ENCODE measurements at regions of chr15 and their contacts with region 1.

Region 1: DNA sequence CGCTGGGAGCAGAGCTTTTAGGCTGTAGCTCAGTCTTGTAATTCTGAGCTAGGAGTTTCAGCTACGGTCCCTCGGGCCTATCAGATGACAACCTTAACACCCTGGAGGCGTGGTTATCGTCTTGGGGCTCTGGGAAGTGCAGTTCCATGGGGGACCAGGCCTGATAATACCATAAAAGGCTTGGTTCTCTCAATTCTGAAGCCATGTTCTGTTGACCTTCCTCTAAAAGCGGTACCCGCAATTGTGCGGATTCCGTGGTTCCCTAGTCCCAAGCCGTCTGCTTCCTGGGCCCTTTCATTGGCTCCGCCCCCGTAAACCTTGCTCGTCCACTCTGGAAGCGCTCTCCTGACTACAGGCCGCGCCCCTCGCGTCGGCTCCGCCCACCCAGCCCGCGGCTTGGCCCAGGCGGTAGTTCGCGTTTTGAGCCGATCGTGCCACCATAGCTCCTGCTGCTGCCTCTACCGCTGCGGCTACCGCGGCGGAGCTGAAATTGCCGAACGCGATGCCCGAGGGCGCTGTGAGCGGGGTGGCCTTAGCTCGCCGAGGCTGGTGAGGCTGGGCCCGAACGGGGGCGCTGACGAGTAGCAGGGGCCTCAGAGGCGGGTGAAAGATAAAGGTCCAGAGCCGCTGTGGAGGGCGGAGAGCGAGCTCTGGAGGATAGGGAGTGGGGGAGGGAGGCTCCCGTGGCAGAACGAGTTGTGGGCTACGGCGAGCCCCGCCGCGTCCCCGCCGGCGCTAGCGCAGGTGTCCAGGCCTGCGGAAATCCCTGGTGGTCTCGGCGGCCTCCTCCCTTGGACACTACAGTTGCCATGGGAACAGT is at the start of gene MAPKBP1:
- DNase-seq: peak; percentile 97 to 98
- H3K4me3 ChIP-seq: peak within 1 kb of the TSS; percentile 65
- H3K4me3 Mint-ChIP-seq: peak within 1 kb of the TSS; percentile 94
- H3K27ac Mint-ChIP-seq: peak within 1 kb of the TSS; percentile 91
- H3K4me1 ChIP-seq: peaks cover 18% of the 10 kb centered on the region
- H3K4me1 Mint-ChIP-seq: peaks cover 27% of the 10 kb centered on the region
- H3K27me3 ChIP-seq: no peaks in the 10 kb centered on the region
- H3K27me3 Mint-ChIP-seq: no peaks in the 10 kb centered on the region
- CTCF ChIP-seq: peak; percentile 63 to 84
- total RNA-seq, gene MAPKBP1: 16.2 and 23.0 TPM in 2 replicates

Region 2: GRCh38 chr15:41557673-41558399 is 216.4 kb before region 1 on chr15:
- CTCF ChIA-PET with region 1: no interaction called
- POLR2A ChIA-PET with region 1: no interaction called
- intact Hi-C with region 1: loop called (anchors 5 kb)
- DNase-seq: peak; percentile 73 to 79
- H3K4me3 ChIP-seq: peak overlapping the region; percentile 56
- H3K4me3 Mint-ChIP-seq: peak overlapping the region; percentile 94
- H3K27ac Mint-ChIP-seq: peak overlapping the region; percentile 91
- H3K4me1 ChIP-seq: peaks cover 38% of the 10 kb centered on the region
- H3K4me1 Mint-ChIP-seq: peaks cover 27% of the 10 kb centered on the region
- H3K27me3 ChIP-seq: no peaks in the 10 kb centered on the region
- H3K27me3 Mint-ChIP-seq: no peaks in the 10 kb centered on the region
- CTCF ChIP-seq: peak; percentile 82 to 92

Region 3: GRCh38 chr15:41806291-41807181 is 32.3 kb after region 1 on chr15:
- CTCF ChIA-PET with region 1: interaction called, 47 read pairs
- POLR2A ChIA-PET with region 1: interaction called, 4 read pairs
- intact Hi-C with region 1: loop called (anchors 1 kb)
- DNase-seq: peak in 1 of 2 experiments; percentile 46
- H3K4me3 ChIP-seq: no peak overlapping the region
- H3K4me3 Mint-ChIP-seq: no peak overlapping the region
- H3K27ac Mint-ChIP-seq: no peak overlapping the region
- H3K4me1 ChIP-seq: no peaks in the 10 kb centered on the region
- H3K4me1 Mint-ChIP-seq: no peaks in the 10 kb centered on the region
- H3K27me3 ChIP-seq: no peaks in the 10 kb centered on the region
- H3K27me3 Mint-ChIP-seq: no peaks in the 10 kb centered on the region
- CTCF ChIP-seq: no peak

Region 4: GRCh38 chr15:41811432-41812195 is 37.3 kb after region 1 on chr15:
- CTCF ChIA-PET with region 1: interaction called, 47 read pairs
- POLR2A ChIA-PET with region 1: interaction called, 4 read pairs
- intact Hi-C with region 1: loop called (anchors 1 kb)
- DNase-seq: peak; percentile 79 to 86
- H3K4me3 ChIP-seq: no peak overlapping the region
- H3K4me3 Mint-ChIP-seq: no peak overlapping the region
- H3K27ac Mint-ChIP-seq: no peak overlapping the region
- H3K4me1 ChIP-seq: no peaks in the 10 kb centered on the region
- H3K4me1 Mint-ChIP-seq: no peaks in the 10 kb centered on the region
- H3K27me3 ChIP-seq: no peaks in the 10 kb centered on the region
- H3K27me3 Mint-ChIP-seq: no peaks in the 10 kb centered on the region
- CTCF ChIP-seq: peak; percentile 87 to 90

Region 5: GRCh38 chr15:41904541-41905005 is 130.3 kb after region 1 on chr15:
- CTCF ChIA-PET with region 1: interaction called, 23 read pairs
- POLR2A ChIA-PET with region 1: no interaction called
- intact Hi-C with region 1: loop called (anchors 2 kb)
- DNase-seq: peak; percentile 56 to 68
- H3K4me3 ChIP-seq: no peak overlapping the region
- H3K4me3 Mint-ChIP-seq: no peak overlapping the region
- H3K27ac Mint-ChIP-seq: no peak overlapping the region
- H3K4me1 ChIP-seq: no peaks in the 10 kb centered on the region
- H3K4me1 Mint-ChIP-seq: no peaks in the 10 kb centered on the region
- H3K27me3 ChIP-seq: no peaks in the 10 kb centered on the region
- H3K27me3 Mint-ChIP-seq: no peaks in the 10 kb centered on the region
- CTCF ChIP-seq: peak; percentile 77 to 85

Region 6: GRCh38 chr15:41999290-42000285 is 225.3 kb after region 1 on chr15:
- CTCF ChIA-PET with region 1: no interaction called
- POLR2A ChIA-PET with region 1: no interaction called
- intact Hi-C with region 1: no loop called
- DNase-seq: no peak
- H3K4me3 ChIP-seq: no peak overlapping the region
- H3K4me3 Mint-ChIP-seq: no peak overlapping the region
- H3K27ac Mint-ChIP-seq: peak overlapping the region; percentile 18
- H3K4me1 ChIP-seq: peaks cover 7% of the 10 kb centered on the region; the same call in 1 of the 2 replicates
- H3K4me1 Mint-ChIP-seq: peaks cover 15% of the 10 kb centered on the region
- H3K27me3 ChIP-seq: no peaks in the 10 kb centered on the region
- H3K27me3 Mint-ChIP-seq: no peaks in the 10 kb centered on the region
- CTCF ChIP-seq: no peak

Region 7: GRCh38 chr15:42084460-42085235 is 310.4 kb after region 1 on chr15:
- CTCF ChIA-PET with region 1: no interaction called
- POLR2A ChIA-PET with region 1: no interaction called
- intact Hi-C with region 1: loop called (anchors 5 kb)
- DNase-seq: peak; percentile 69 to 81
- H3K4me3 ChIP-seq: no peak overlapping the region
- H3K4me3 Mint-ChIP-seq: no peak overlapping the region
- H3K27ac Mint-ChIP-seq: no peak overlapping the region
- H3K4me1 ChIP-seq: no peaks in the 10 kb centered on the region
- H3K4me1 Mint-ChIP-seq: peaks cover 8% of the 10 kb centered on the region
- H3K27me3 ChIP-seq: no peaks in the 10 kb centered on the region
- H3K27me3 Mint-ChIP-seq: no peaks in the 10 kb centered on the region
- CTCF ChIP-seq: peak; percentile 90 to 92